CD4-positive, alpha-beta memory T cell (primary cell): ENCODE measurements at regions of chr1 and their contacts with region 1.

Region 1: GRCh38 chr1:155063550-155064110 is at the start of gene EFNA4:
- DNase-seq: peak; percentile 83 to 87 (median 86)
- H3K4me3 ChIP-seq: peak within 1 kb of the TSS; percentile 63 to 70
- H3K4me3 Mint-ChIP-seq: peak within 1 kb of the TSS; percentile 91 to 99 (median 94)
- H3K27ac ChIP-seq: peak within 1 kb of the TSS; percentile 51
- H3K27ac Mint-ChIP-seq: peak within 1 kb of the TSS; percentile 81 to 94 (median 85)
- H3K4me1 ChIP-seq: peaks cover 35% of the 10 kb centered on the region
- H3K4me1 Mint-ChIP-seq: peaks cover 23 to 52% (median 32%) of the 10 kb centered on the region in 4 donors
- H3K27me3 ChIP-seq: no peaks in the 10 kb centered on the region
- H3K27me3 Mint-ChIP-seq: no peaks in the 10 kb centered on the region
- total RNA-seq, gene EFNA4: 6.0 to 8.5 TPM

Region 2: GRCh38 chr1:154961497-154962262 is 102.0 kb before region 1 on chr1 and contains the start of gene PYGO2:
- CTCF ChIA-PET with region 1: interaction called, 3 read pairs
- POLR2A ChIA-PET with region 1: interaction called, 3 read pairs
- intact Hi-C with region 1: loop called (anchors 2 kb)
- DNase-seq: peak; percentile 81 to 88 (median 82)
- H3K4me3 ChIP-seq: peak within 1 kb of the TSS; percentile 63 to 65
- H3K4me3 Mint-ChIP-seq: peak within 1 kb of the TSS; percentile 94 to 98 (median 97)
- H3K27ac ChIP-seq: peak within 1 kb of the TSS; percentile 84
- H3K27ac Mint-ChIP-seq: peak within 1 kb of the TSS; percentile 97 to 99 (median 98)
- H3K4me1 ChIP-seq: peaks cover 43% of the 10 kb centered on the region
- H3K4me1 Mint-ChIP-seq: peaks cover 21 to 57% (median 37%) of the 10 kb centered on the region in 4 donors
- H3K27me3 ChIP-seq: no peaks in the 10 kb centered on the region
- H3K27me3 Mint-ChIP-seq: no peaks in the 10 kb centered on the region
- total RNA-seq, gene PYGO2: 78.4 to 80.2 TPM

Region 3: GRCh38 chr1:154990276-154990675 is 73.4 kb before region 1 on chr1:
- CTCF ChIA-PET with region 1: no interaction called
- POLR2A ChIA-PET with region 1: no interaction called
- intact Hi-C with region 1: no loop called
- DNase-seq: no peak
- H3K4me3 ChIP-seq: no peak overlapping the region
- H3K4me3 Mint-ChIP-seq: no peak overlapping the region
- H3K27ac ChIP-seq: no peak overlapping the region
- H3K27ac Mint-ChIP-seq: no peak overlapping the region
- H3K4me1 ChIP-seq: peaks cover 16% of the 10 kb centered on the region
- H3K4me1 Mint-ChIP-seq: peaks cover 9 to 19% (median 12%) of the 10 kb centered on the region in 4 donors
- H3K27me3 ChIP-seq: no peaks in the 10 kb centered on the region
- H3K27me3 Mint-ChIP-seq: no peaks in the 10 kb centered on the region

Region 4: GRCh38 chr1:155044812-155045690 is 18.6 kb before region 1 on chr1:
- CTCF ChIA-PET with region 1: interaction called, 203 read pairs
- POLR2A ChIA-PET with region 1: interaction called, 83 read pairs
- intact Hi-C with region 1: loop called (anchors 1 kb)
- DNase-seq: peak; percentile 60 to 66 (median 64)
- H3K4me3 ChIP-seq: no peak overlapping the region
- H3K4me3 Mint-ChIP-seq: no peak overlapping the region
- H3K27ac ChIP-seq: no peak overlapping the region
- H3K27ac Mint-ChIP-seq: peak overlapping the region in 1 of 7 donors; percentile 5
- H3K4me1 ChIP-seq: peaks cover 5% of the 10 kb centered on the region
- H3K4me1 Mint-ChIP-seq: peaks cover 7 to 16% (median 11%) of the 10 kb centered on the region in 4 donors
- H3K27me3 ChIP-seq: no peaks in the 10 kb centered on the region
- H3K27me3 Mint-ChIP-seq: no peaks in the 10 kb centered on the region

Region 5: DNA sequence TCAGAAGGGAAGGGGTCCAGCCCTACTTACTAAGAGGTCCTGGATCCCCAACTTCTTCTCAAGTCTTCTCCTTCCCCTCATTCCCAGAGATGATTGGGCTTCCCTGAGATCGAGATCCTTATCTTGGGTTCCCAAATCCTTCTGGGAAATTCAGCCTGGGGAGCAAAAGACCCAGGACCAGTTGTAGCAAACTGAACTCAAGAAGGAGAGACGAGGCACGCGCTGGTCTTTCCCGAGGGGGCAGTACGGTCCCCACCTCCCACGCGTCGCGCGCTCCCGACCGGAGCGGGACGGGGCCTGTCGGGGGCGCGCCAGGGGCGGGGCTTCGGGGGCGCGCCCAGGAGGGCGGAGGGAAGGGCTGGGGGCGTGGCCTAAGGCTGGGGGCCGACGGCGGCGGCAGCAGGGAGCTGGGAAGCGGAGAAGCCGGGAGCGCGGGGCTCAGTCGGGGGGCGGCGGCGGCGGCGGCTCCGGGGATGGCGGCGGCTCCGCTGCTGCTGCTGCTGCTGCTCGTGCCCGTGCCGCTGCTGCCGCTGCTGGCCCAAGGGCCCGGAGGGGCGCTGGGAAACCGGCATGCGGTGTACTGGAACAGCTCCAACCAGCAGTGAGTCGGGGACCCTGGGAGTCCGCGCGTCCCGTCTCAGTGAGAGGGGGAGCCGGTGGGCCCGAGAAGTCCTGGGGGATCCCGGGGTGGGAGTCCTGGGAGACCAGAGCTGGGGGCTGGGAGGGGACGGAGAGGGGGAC is 15.0 kb after region 1 on chr1 and contains the start of gene EFNA3:
- CTCF ChIA-PET with region 1: interaction called, 74 read pairs
- POLR2A ChIA-PET with region 1: interaction called, 62 read pairs
- intact Hi-C with region 1: no loop called
- DNase-seq: peak in 4 of 5 donors; percentile 52 to 64 (median 53)
- H3K4me3 ChIP-seq: peak within 1 kb of the TSS; percentile 41 to 42
- H3K4me3 Mint-ChIP-seq: peak within 1 kb of the TSS; percentile 82 to 93 (median 86)
- H3K27ac ChIP-seq: no peak within 1 kb of the TSS
- H3K27ac Mint-ChIP-seq: peak within 1 kb of the TSS; percentile 59 to 84 (median 71)
- H3K4me1 ChIP-seq: peaks cover 55% of the 10 kb centered on the region
- H3K4me1 Mint-ChIP-seq: peaks cover 24 to 61% (median 40%) of the 10 kb centered on the region in 4 donors
- H3K27me3 ChIP-seq: peaks cover 25% of the 10 kb centered on the region
- H3K27me3 Mint-ChIP-seq: peaks cover 9 to 23% of the 10 kb centered on the region in 2 donors
- total RNA-seq, gene EFNA3: 2.0 to 4.3 TPM